Activated CD4-positive, alpha-beta T cell treated with anti-CD3 and anti-CD28 coated beads, Interleukin-2, amount 10 ng/mL, durations not matched to agents 7 days and 5 days (primary cell): ENCODE measurements at regions of chr10 and their contacts with region 1.

Region 1: DNA sequence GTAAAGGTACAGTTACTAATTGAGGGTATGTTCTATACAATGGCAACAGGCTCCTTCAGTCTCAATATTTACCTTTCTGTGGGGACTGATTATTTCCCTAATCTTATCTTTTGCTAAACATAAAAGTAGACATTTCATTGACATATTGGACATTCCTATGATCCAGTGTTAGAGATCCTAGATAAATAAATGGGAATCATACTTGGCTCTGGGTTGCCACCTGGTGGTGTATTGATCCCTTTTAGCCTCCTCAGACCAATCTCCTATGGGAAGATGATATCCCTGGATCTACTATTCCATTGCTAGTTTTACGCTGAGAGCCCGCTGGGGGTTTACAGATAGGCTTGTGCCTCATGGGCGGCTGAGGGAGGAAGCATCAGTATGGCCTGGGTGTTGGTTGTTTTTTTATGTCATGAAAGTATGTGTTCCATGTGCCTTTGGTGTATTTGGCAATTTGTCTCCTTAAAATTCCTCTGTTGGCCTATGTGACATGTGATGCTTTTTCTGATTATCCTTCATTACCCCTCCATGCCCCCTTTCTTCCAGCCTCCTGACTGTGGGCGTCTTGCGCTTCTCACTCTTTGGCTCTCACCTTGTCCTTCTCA is 18.8 kb downstream of the CELF2 start:
- DNase-seq: no peak
- H3K4me3 Mint-ChIP-seq: no peak overlapping the region
- H3K27ac Mint-ChIP-seq: no peak overlapping the region
- H3K4me1 Mint-ChIP-seq: peaks cover 7% of the 10 kb centered on the region
- H3K27me3 Mint-ChIP-seq: peaks cover 7% of the 10 kb centered on the region

Region 2: GRCh38 chr10:10847317-10847912 is 189.1 kb before region 1 on chr10:
- CTCF ChIA-PET with region 1: no interaction called
- POLR2A ChIA-PET with region 1: no interaction called
- DNase-seq: no peak
- H3K4me3 Mint-ChIP-seq: no peak overlapping the region
- H3K27ac Mint-ChIP-seq: no peak overlapping the region
- H3K4me1 Mint-ChIP-seq: no peaks in the 10 kb centered on the region
- H3K27me3 Mint-ChIP-seq: peaks cover 27% of the 10 kb centered on the region

Region 3: DNA sequence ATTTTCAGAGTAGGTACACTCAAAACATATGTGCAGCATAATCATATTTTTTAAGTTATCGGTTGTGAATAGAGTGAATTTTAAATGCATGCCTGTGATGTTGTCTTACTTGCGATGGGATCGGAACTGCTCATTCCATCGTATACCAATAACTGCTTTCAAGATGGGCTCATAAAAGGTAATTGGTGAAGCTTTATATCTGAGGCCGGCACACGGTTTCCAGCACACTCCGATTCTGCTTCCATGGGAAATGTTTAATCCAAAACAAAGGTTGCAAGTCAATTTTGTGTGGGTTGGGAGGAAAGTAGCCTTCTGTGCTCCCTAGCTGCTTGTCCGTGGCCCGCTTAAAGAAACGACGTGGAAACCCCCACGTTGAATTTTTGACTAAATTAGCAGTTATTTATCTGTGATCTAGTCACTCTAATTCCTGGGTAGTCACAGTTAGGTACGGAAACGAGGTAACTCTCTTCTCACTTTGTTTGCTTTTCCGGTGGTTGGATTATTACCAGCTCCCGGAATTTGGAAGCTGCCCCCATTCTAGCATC is 29.0 kb before region 1 on chr10:
- CTCF ChIA-PET with region 1: interaction called, 4 read pairs
- POLR2A ChIA-PET with region 1: interaction called, 11 read pairs
- DNase-seq: no peak
- H3K4me3 Mint-ChIP-seq: no peak overlapping the region
- H3K27ac Mint-ChIP-seq: no peak overlapping the region
- H3K4me1 Mint-ChIP-seq: peaks cover 30% of the 10 kb centered on the region
- H3K27me3 Mint-ChIP-seq: peaks cover 58% of the 10 kb centered on the region

Region 4: DNA sequence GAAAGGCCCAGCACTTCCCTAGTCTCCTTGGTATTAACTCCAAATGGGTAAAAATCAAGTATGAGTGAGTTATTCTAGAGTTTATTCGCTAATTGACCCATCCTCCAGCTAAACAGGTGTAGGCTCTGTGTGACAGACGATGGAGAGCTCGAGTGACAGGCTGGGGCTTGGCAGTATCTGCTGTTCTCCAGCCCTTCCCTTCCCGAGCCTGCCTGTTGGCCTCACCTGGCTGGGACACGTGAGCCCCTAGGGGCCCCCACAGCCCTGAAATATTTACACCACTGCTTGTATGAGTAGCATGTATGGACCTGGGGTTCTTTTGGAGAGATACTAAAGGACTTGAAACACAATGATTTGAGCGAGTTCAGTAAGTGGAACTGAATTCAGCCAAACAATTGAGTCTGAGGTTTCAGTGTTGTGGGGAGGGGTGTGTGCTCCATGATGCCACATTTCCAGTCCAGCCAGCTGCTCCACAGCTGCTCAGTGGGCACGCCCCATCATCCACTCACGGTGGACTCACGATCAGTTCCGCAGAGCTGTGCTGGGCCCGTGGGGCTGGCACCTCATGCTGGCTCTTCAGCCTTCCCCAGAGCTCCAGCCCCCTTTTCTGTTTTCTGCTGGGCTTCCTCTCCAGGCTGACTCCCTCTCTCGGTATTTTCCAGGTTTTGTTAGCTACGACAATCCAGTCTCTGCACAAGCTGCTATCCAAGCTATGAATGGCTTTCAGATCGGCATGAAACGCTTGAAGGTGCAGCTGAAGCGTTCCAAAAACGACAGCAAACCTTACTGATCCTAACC is 292.0 kb after region 1 on chr10:
- CTCF ChIA-PET with region 1: no interaction called
- POLR2A ChIA-PET with region 1: no interaction called
- DNase-seq: no peak
- H3K4me3 Mint-ChIP-seq: no peak overlapping the region
- H3K27ac Mint-ChIP-seq: peak overlapping the region; percentile 9
- H3K4me1 Mint-ChIP-seq: peaks cover 38% of the 10 kb centered on the region
- H3K27me3 Mint-ChIP-seq: no peaks in the 10 kb centered on the region